ENCODE measurements at regions of chr17 and their contacts with region 1.

Region 1: DNA sequence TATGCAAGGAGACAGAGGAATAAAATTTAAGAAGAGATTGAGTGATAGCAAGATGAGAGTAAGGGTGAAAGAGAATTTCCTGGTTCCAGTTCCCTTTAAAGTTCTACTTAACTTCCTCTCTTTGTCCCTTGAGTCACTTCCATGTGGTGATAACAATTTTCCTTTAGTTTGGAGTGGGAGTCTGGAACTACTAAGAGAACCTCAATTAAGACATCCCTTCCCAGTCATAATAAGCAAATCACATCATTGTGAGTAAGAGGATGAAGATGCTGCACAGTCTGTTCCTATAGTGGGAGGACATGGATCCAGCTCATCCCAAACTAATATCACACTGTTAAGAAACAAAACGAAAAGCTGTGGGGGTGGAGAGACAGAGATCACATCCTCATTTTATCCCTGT is 24.4 kb downstream of the TBX21 start:
- DNase-seq: no peak
- H3K4me3 ChIP-seq: no peak overlapping the region
- H3K27ac ChIP-seq: no peak overlapping the region
- H3K4me1 ChIP-seq: no peaks in the 10 kb centered on the region
- H3K27me3 ChIP-seq: peaks cover 22% of the 10 kb centered on the region
- CTCF ChIP-seq: no peak

Region 2: GRCh38 chr17:47663912-47664625 is 93.3 kb before region 1 on chr17:
- CTCF ChIA-PET with region 1: no interaction called
- POLR2A ChIA-PET with region 1: interaction called, 11 read pairs
- intact Hi-C with region 1: no loop called
- DNase-seq: peak; percentile 63
- H3K4me3 ChIP-seq: no peak overlapping the region
- H3K27ac ChIP-seq: no peak overlapping the region
- H3K4me1 ChIP-seq: no peaks in the 10 kb centered on the region
- H3K27me3 ChIP-seq: no peaks in the 10 kb centered on the region
- CTCF ChIP-seq: peak; percentile 67

Region 3: DNA sequence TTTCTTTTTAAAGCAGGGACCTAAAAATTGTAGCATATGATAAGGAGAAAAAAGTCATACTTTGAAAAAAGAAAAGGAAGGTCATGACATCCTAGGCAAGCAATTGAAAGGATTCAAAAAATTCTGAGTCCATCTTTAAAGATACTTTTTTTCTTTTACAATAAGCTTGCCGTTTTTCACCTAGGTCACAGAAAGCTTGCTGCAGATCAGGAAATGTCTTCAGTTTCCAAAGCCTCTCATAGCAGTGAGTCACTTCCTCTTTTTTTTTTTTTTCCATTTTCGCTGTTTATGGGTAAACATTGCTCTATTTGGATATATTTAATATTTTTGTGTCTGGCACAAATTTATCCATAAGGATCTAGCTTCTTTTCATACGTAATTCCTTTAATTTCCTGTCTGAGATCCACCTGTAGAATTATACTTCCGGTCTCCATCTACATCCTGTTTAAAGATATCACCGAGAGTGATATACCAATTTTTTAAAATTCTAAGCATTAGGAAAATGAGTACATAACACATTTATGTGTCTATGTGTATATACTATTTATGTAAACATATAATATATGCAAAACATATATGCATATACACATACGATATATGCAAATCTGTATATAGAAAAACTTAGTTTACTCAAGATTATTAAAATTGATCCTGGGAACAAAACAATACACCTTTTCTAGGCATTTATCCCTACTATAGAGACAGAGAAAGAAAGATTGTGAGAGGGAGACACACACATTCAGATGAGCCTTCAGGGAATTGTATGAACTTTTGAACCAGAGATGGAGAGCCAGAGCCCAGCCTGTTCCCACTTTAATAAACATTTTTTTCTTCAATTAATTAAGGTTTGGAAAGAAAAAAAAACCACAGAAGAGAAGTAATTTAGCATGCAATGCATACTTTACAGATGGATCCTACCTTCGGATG is 538.2 kb after region 1 on chr17:
- CTCF ChIA-PET with region 1: no interaction called
- POLR2A ChIA-PET with region 1: no interaction called
- intact Hi-C with region 1: no loop called
- DNase-seq: peak; percentile 45
- H3K4me3 ChIP-seq: no peak overlapping the region
- H3K27ac ChIP-seq: peak overlapping the region; percentile 43
- H3K4me1 ChIP-seq: peaks cover 19% of the 10 kb centered on the region
- H3K27me3 ChIP-seq: no peaks in the 10 kb centered on the region
- CTCF ChIP-seq: no peak